ENCODE measurements at regions of chr1 and their contacts with region 1.

Region 1: GRCh38 chr1:94335950-94336349 is 82.2 kb upstream of the ABCD3 start:
- DNase-seq: no peak
- ATAC-seq: peak; percentile 91
- H3K4me3 ChIP-seq: no peak overlapping the region
- H3K27ac ChIP-seq: no peak overlapping the region
- H3K4me1 ChIP-seq: peaks cover 13% of the 10 kb centered on the region
- H3K27me3 ChIP-seq: no peaks in the 10 kb centered on the region
- CTCF ChIP-seq: peak; percentile 85

Region 2: DNA sequence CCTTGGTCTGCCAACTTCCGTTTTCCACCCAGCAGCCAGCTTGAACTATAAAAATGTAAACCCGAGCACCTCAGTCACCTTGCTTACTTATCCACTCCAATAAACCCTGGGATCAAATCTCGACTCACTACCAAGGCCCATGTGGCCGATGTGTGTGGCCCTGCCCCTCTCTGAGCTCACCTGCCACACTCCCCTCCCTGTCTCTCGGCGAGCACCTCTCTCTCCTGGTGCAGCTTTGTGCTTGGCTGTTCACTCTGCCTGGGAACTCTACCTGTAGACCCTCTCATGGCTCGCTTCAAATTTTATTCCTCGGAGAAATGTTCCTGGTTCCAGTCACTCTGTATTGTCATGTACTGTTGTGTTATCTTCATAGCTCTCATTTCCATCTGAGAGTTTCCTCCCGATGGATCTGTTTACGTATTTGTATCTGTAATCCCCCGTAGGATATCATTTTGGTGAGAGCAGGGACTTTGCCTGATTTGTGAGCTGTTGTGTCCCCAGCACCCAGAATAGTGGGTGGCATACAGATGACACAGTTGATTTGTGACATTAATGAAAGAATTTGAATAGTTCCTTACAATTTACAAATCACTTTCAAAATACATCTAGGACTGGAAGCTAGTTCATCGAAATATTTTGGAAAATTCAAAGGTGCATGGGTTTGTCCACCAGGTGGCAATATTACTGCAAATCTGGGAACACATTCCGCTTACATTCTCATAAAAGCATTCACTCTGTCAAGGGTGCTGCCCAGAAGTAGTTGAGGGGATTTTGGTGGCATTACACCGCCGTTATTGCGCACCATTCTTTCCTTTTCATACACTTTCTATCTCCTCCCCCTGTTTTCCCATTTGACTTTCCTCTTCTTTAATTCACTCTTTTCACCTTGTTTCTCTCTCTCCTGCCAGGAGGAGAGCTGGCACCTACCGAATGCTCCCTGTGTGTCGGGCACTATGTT is 310.3 kb before region 1 on chr1:
- intact Hi-C with region 1: loop called (anchors 2 kb)
- DNase-seq: no peak
- ATAC-seq: peak; percentile 61
- H3K4me3 ChIP-seq: no peak overlapping the region
- H3K27ac ChIP-seq: no peak overlapping the region
- H3K4me1 ChIP-seq: peaks cover 22% of the 10 kb centered on the region
- H3K27me3 ChIP-seq: no peaks in the 10 kb centered on the region
- CTCF ChIP-seq: peak; percentile 84

Region 3: GRCh38 chr1:94055459-94056122 is 280.4 kb before region 1 on chr1:
- intact Hi-C with region 1: loop called (anchors 10 kb)
- DNase-seq: no peak
- ATAC-seq: no peak
- H3K4me3 ChIP-seq: no peak overlapping the region
- H3K27ac ChIP-seq: no peak overlapping the region
- H3K4me1 ChIP-seq: no peaks in the 10 kb centered on the region
- H3K27me3 ChIP-seq: no peaks in the 10 kb centered on the region
- CTCF ChIP-seq: no peak

Region 4: DNA sequence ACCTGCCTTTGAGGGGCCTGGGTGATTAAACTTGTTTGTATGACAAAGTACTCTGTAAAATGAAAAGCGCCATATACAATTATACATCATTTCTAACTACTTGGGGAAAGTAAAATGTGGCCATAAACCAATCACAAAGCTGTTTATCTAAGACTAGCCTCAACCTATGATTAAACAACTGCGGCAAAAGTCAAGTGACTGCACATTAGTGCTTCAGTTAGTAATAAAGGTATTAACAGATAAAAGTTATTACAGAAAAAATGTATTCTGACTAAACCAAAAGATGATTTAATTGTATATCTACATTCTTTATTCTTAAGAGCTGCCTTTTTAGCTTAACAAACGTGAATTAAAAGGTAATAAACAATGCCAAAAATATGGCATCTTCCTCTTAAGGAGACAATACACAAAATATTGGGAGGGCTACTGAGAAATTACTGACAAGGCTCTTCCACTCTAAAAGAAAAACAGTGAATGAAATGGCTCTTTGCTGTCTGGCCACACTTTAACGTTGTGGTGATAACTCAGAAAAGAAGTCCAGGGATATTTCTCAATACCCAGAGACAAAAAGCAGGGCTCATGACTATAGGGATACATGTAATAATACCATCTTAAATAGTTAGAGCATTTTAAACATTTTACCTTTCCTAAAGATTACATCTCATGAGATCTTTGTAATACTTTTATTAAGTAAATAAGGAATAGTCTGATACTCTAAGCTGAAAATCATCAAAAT is 107.1 kb before region 1 on chr1:
- intact Hi-C with region 1: no loop called
- DNase-seq: no peak
- ATAC-seq: no peak
- H3K4me3 ChIP-seq: no peak overlapping the region
- H3K27ac ChIP-seq: no peak overlapping the region
- H3K4me1 ChIP-seq: peaks cover 15% of the 10 kb centered on the region
- H3K27me3 ChIP-seq: no peaks in the 10 kb centered on the region
- CTCF ChIP-seq: no peak